A549 (cell line): ENCODE measurements at regions of chr11 and their contacts with region 1.

Region 1: GRCh38 chr11:66638177-66639065 is at the start of gene RBM4:
- DNase-seq: peak; percentile 99 to 100
- ATAC-seq: peak; percentile 95
- H3K4me3 ChIP-seq: peak within 1 kb of the TSS; percentile 71
- H3K27ac ChIP-seq: peak within 1 kb of the TSS; percentile 88 to 91
- H3K4me1 ChIP-seq: peaks cover 44% of the 10 kb centered on the region
- CTCF ChIP-seq: 0 out of 3 replicates have a peak, but pooled peaks have one; percentile 6
- EP300 ChIP-seq: no peak
- POLR2A ChIP-seq: peak; percentile 73
- RAD21 ChIP-seq: no peak
- polyA plus RNA-seq, gene RBM4: 190 and 264 TPM in 2 replicates

Region 2: DNA sequence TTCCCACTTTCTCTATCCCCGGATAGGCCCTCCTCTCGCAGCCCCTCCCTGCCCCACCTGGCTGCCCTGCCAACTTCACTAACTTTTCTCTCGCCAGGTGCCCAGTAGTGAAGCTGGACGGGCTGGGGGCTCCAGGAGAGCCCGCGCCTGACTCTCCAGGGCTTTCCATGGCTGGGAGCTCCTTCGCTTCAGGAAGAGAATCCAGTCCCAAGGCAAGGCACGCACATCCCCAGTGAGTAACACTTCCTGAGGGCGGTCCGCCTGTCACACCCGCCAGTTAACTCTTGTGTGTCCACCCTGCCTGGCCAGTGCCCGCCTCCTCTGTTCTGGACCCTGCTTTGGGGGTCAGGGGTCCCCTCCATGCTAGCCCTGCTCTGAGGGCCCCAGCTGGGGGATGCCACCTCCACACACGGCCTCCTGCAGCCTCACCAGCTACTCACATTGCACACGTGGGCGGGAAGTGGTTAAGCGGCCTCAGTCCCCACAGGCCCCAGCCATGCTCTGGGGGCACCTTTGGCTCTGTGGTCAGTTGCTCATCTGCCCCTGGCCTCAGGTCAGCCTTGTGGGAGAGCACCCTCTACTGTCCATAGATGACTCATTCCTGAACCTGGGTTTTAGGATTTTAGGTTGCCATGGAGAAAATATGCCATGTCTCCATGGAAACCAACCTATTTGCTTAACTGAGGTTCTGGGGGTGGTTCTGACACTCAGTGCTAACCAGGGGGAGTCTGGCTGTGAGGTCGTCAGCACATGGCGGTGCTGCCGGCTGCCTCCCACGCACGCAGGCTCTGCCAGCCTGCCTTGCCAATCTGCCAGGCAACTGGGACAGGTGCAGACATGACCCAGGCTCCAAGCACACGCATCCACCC is 302.0 kb before region 1 on chr11 and contains the start of gene RIN1:
- CTCF ChIA-PET with region 1: no interaction called
- POLR2A ChIA-PET with region 1: no interaction called
- DNase-seq: peak; percentile 86 to 93
- ATAC-seq: peak; percentile 74 to 86
- H3K4me3 ChIP-seq: peak within 1 kb of the TSS; percentile 56
- H3K27ac ChIP-seq: peak within 1 kb of the TSS; percentile 83 to 97
- H3K4me1 ChIP-seq: peaks cover 26% of the 10 kb centered on the region
- CTCF ChIP-seq: peak; percentile 53
- EP300 ChIP-seq: no peak
- POLR2A ChIP-seq: peak; percentile 34
- RAD21 ChIP-seq: peak; percentile 63 to 74; a peak in 4 of 5 replicates
- polyA plus RNA-seq, gene RIN1: 2.0 and 2.3 TPM in 2 replicates

Region 3: DNA sequence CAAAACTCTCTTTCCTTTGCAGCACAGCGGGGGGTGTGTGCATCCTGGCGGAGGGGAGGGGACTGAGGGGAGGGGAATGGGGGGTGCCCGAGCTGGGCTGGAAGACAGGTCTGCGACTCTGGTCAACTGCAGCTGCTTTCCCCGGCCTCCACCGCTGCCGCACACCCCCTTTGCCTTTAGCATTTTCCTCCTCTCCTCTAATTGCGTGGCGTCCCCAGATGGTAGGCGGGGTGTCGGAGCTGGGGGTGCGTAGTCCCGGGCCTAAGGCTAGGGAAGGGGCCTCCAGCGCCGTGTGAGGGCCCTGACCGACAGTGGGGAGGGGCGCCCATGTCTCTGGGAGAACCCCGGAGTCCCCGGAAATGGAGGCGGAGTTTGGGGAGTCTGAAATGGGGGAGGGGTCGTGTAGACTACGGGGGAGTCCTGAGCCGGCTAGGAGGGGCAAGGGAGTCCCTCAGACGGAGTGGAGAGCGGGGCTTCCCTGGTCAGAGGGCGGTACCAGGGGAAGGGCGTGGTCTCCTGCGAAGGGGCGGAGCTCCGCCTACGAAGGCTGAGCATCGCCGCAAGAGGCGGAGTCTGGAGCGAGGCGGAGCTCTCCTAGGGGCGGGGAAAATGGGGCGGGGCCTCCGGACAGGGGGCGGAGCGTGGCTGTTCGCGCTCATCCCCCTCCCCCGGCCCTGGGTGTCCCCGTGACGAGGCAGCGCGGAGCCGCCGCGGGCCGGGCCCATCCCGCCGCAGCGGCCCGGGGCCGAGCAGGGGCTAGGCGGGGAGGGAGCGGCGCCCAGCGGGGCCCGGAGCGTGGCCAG is 172.0 kb before region 1 on chr11 and contains the start of gene PELI3:
- CTCF ChIA-PET with region 1: no interaction called
- POLR2A ChIA-PET with region 1: interaction called, 16 read pairs
- DNase-seq: peak; percentile 84 to 89
- ATAC-seq: peak; percentile 86 to 94
- H3K4me3 ChIP-seq: peak within 1 kb of the TSS; percentile 72
- H3K27ac ChIP-seq: peak within 1 kb of the TSS; percentile 76 to 95
- H3K4me1 ChIP-seq: peaks cover 10% of the 10 kb centered on the region
- CTCF ChIP-seq: no peak
- EP300 ChIP-seq: no peak
- POLR2A ChIP-seq: peak; percentile 17
- RAD21 ChIP-seq: no peak
- polyA plus RNA-seq, gene PELI3: 2.3 and 2.7 TPM in 2 replicates

Region 4: DNA sequence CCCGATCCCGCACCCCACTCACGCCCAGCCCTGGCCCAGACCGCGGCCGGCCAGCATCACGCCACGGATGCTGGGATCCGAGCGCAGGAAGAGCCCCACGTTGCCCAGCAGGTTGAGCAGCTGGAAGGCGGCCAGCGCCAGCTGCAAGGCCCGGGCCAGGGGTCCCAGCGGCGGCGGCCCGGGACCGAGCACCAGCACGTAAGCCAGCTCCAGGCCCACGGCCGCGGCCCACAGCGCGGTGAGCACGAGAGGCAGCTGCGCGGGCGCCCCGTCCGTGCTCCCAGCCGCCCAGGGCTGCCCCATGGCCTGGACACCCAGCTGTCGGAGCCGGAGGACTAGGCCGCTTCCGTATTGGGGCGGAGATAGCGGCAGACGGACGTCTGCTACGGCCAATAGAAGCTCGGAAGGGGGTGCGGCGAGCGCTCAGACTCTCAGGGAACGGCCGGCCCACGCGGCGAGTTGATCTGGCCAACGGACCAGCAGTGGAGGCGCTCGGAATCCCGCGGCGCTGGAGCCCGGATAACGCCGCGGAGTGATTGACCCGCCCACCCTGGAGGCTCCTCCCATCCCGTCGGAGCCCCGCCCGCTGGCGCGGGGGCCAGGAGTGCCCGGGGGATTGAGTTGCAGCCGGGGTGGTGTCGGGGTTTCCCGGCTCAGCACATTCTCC is 92.6 kb before region 1 on chr11 and contains the start of gene ZDHHC24:
- CTCF ChIA-PET with region 1: no interaction called
- POLR2A ChIA-PET with region 1: interaction called, 13 read pairs
- DNase-seq: peak; percentile 97
- ATAC-seq: peak; percentile 89 to 98
- H3K4me3 ChIP-seq: peak within 1 kb of the TSS; percentile 85
- H3K27ac ChIP-seq: peak within 1 kb of the TSS; percentile 85 to 96
- H3K4me1 ChIP-seq: peaks cover 17% of the 10 kb centered on the region
- CTCF ChIP-seq: no peak
- EP300 ChIP-seq: no peak
- POLR2A ChIP-seq: peak; percentile 71
- RAD21 ChIP-seq: no peak
- polyA plus RNA-seq, gene ZDHHC24: 8.4 and 8.6 TPM in 2 replicates

Region 5: GRCh38 chr11:66625041-66625751 is 13.2 kb before region 1 on chr11:
- CTCF ChIA-PET with region 1: interaction called, 8 read pairs
- POLR2A ChIA-PET with region 1: interaction called, 19 read pairs
- DNase-seq: no peak
- ATAC-seq: no peak; a peak in 3 of 6 replicates
- H3K4me3 ChIP-seq: no peak overlapping the region
- H3K27ac ChIP-seq: no peak overlapping the region
- H3K4me1 ChIP-seq: peaks cover 16% of the 10 kb centered on the region
- CTCF ChIP-seq: no peak
- EP300 ChIP-seq: no peak
- POLR2A ChIP-seq: no peak
- RAD21 ChIP-seq: no peak

Region 6: DNA sequence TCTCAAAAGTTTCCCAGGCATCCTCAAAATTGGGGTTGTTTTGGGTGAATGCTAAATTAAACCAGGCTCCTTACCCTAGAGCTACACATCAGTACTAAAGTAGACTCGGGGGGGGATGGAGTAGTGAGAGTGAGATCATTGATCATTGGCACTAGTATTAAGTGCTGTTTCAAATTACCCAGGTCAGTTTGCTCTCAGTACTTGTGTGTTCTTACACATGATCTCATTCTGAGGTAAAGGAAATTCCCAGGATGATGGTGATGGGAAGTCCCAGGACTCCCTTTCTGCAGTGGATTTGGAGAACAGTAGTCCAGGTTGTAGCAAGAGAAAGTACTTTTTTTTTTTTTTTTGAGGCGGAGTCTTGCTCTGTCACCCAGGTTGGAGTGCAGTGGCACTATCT is 12.6 kb after region 1 on chr11:
- CTCF ChIA-PET with region 1: interaction called, 12 read pairs
- POLR2A ChIA-PET with region 1: interaction called, 31 read pairs
- DNase-seq: no peak
- ATAC-seq: peak in 1 of 2 experiments; percentile 20; a peak in 1 of 6 replicates
- H3K4me3 ChIP-seq: no peak overlapping the region
- H3K27ac ChIP-seq: no peak overlapping the region
- H3K4me1 ChIP-seq: no peaks in the 10 kb centered on the region
- CTCF ChIP-seq: no peak
- EP300 ChIP-seq: no peak
- POLR2A ChIP-seq: no peak
- RAD21 ChIP-seq: no peak

Region 7: DNA sequence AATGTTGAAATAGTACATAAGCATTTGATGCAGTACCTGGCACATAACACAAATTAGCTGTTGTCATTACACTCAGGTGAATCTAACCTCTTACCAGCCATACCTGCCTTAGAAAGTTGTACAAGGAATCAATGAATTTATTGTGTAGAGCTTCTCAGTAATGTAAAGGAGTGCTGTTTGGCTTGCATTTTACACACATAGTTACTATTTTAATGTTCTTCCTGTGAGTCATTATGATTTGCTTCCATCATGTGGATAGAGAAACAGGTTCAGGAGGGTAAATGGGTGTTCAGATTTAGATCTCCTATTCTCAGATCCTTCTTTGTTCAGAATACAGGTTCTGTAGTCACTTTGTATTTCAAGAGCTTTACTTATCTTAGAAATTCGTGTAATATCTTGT is 177.2 kb after region 1 on chr11:
- CTCF ChIA-PET with region 1: no interaction called
- POLR2A ChIA-PET with region 1: no interaction called
- DNase-seq: no peak
- ATAC-seq: no peak
- H3K4me3 ChIP-seq: no peak overlapping the region
- H3K27ac ChIP-seq: no peak overlapping the region
- H3K4me1 ChIP-seq: no peaks in the 10 kb centered on the region
- CTCF ChIP-seq: no peak
- EP300 ChIP-seq: no peak
- POLR2A ChIP-seq: no peak
- RAD21 ChIP-seq: no peak